BJ (cell line): ENCODE measurements at regions of chr19 and their contacts with region 1.

Region 1: DNA sequence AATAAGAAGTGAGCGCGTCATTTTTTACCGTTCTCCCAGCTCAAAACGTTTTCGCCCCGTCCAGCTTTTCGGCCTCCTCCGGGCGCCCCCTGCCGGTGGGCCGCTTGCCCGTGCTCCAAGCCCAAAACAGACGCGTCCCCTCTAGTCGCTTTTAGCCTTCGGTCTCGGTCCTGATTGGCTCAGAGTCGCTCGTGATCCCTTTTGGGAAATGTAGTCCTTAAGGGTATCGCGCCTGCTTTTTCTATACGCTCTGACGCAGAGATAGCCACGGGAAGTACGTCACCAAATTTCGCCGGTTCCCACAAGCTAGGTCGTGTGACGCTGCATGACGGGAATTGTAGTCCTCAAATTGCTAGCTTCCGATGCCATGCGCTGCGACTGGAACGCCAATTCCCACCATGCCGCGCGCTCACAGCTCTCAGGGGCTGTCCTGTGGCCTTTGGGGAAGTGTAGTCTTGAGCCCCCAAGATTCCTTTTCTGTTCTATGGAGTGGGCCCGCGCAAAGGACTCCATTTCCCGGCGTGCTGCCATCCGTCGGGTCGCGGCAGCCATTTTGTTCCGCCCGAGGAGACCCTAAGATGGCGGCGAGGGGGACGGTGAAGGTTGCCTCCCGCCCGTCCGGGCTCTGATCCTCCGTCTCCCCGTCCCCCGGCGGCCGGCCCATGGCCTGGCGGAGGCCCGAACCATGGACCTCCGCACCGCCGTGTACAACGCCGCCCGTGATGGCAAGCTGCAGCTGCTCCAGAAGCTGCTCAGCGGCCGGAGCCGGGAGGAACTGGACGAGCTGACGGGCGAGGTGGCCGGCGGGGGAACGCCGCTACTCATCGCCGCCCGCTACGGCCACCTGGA is at the start of gene FEM1A:
- DNase-seq: peak; percentile 100
- H3K4me3 ChIP-seq: peak within 1 kb of the TSS; percentile 83
- H3K27me3 ChIP-seq: no peaks in the 10 kb centered on the region
- CTCF ChIP-seq: peak; percentile 99
- polyA plus RNA-seq, gene FEM1A: 3.8 and 5.6 TPM in 2 replicates

Region 2: GRCh38 chr19:4723367-4724187 is 67.8 kb before region 1 on chr19 and contains the start of gene DPP9:
- CTCF ChIA-PET with region 1: interaction called, 141 read pairs
- POLR2A ChIA-PET with region 1: interaction called, 6 read pairs
- DNase-seq: peak; percentile 89
- H3K4me3 ChIP-seq: peak within 1 kb of the TSS; percentile 60
- H3K27me3 ChIP-seq: no peaks in the 10 kb centered on the region
- CTCF ChIP-seq: peak; percentile 26; the same call in 1 of the 2 replicates
- polyA plus RNA-seq, gene DPP9: 4.5 and 12.3 TPM in 2 replicates

Region 3: DNA sequence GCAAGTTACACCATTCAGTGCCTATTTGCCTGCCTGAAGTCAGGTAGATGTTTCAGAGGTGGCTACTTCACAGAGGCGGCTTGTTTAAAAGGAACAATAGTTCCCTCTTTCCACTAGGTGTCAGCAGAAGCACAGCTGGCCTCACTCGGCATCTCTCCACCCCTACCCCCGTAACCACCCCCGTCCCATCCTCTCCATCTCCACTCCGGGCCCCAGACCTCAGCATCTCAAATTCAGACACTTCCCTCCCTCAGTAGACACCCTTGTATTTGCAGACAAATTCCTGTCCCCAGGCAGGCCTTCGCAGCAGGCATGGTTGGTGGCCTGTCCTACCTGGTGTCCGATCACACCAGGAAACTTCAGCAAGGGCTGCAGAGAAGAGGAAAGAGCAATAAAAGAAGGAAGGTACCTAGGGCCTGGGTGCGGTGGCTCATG is 58.7 kb before region 1 on chr19:
- CTCF ChIA-PET with region 1: interaction called, 141 read pairs
- POLR2A ChIA-PET with region 1: interaction called, 6 read pairs
- DNase-seq: no peak
- H3K4me3 ChIP-seq: no peak overlapping the region
- H3K27me3 ChIP-seq: no peaks in the 10 kb centered on the region; the same call in 1 of the 2 replicates
- CTCF ChIP-seq: peak; percentile 82

Region 4: DNA sequence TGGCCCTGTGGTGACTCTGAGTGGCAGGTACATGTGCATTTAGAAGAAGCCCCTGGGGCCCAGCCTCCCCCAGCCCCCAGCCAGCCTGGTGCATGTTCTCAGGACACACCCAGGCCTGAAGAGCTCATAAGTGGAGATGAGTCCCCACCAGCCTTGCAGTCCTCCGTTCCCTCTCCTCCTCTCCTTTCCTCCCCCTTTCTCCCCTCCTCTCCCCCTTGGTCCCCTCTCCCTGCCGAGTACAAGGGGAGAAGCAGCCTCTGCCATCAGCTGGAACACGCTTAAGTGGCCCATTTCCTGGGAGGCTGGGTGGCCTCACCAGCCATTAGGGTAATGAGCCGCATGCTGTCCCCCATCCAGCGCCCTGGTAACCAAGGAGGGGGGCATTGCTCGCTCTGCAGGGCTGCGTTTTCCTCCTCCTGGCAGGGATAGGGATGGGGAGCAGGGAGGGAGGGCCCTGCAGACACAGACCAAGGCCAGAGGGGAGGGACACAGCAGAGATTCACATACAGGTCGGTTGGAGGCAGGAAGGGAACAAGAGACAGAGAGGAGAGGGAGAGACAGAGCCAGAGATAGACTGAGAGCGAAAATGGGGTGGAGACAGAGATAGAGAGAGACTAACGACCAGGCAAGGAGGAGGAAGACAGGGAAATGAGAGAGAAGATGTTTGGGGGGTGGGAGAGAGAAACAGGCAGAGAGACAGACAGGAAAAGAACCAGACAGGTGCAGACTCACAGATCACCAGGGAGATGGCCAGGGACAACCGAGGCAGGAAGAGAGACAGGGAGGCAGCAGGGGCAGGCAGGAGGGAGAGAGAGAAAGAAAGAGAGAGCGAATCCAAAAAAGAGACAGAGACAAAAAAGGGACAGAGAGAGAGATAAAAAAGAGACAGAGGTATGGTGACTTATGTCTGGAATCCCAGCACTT is 48.4 kb before region 1 on chr19:
- CTCF ChIA-PET with region 1: interaction called, 24 read pairs
- POLR2A ChIA-PET with region 1: no interaction called
- DNase-seq: no peak
- H3K4me3 ChIP-seq: no peak overlapping the region
- H3K27me3 ChIP-seq: peaks cover 4% of the 10 kb centered on the region
- CTCF ChIP-seq: no peak

Region 5: GRCh38 chr19:4754248-4754647 is 37.1 kb before region 1 on chr19:
- CTCF ChIA-PET with region 1: interaction called, 12 read pairs
- POLR2A ChIA-PET with region 1: no interaction called
- DNase-seq: no peak
- H3K4me3 ChIP-seq: no peak overlapping the region
- H3K27me3 ChIP-seq: peaks cover 3% of the 10 kb centered on the region; the same call in 1 of the 2 replicates
- CTCF ChIP-seq: no peak

Region 6: DNA sequence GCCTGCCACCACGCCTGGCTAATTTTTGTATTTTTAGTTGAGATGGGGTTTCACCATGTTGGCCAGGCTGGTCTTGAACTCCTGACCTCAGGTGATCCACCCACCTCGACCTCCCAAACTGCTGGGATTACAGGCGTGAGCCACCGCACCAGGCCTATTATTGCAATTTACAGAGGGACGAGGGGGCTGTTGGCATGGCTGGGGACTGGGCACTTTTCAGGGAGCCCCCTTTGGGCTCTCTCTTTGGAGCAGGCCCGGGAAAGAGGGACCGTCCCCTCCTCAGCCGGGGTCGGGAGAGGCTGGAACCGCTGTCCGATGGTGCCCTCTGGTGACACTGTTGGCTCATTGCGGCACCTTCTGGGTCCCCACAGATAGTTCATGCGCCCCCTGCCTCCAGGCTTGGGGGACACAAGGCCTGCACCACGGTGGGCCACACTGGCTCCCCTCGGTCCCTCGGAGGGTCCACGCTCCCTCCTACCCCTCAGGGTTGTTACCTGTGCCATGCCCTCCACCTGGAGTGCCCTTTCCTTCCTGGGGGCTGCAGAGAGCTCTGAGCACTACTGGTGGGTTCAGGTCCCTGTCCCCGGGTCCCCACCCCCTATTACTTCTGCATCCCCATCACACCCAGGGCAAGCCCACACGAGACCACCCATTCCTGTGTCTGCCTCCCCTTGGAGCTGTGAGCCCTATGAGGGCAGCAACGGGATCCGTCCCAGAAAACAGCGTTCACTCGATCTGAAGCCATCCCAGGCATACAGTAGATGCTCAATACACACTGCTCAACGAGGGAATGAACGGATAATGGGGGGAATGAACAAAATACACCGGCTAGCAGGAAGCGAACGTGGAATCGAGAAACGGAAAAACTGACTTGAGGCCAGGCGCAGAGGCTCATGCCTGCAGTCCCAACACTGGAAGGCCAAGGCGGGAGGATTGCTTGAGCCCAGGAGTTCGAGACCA is 12.6 kb after region 1 on chr19:
- CTCF ChIA-PET with region 1: interaction called, 15 read pairs
- POLR2A ChIA-PET with region 1: no interaction called
- DNase-seq: no peak
- H3K4me3 ChIP-seq: no peak overlapping the region
- H3K27me3 ChIP-seq: no peaks in the 10 kb centered on the region
- CTCF ChIP-seq: peak; percentile 85

Region 7: GRCh38 chr19:4844348-4845179 is 53.2 kb after region 1 on chr19:
- CTCF ChIA-PET with region 1: interaction called, 12 read pairs
- POLR2A ChIA-PET with region 1: no interaction called
- DNase-seq: no peak
- H3K4me3 ChIP-seq: no peak overlapping the region
- H3K27me3 ChIP-seq: no peaks in the 10 kb centered on the region
- CTCF ChIP-seq: no peak